ENCODE measurements at regions of chr6 and their contacts with region 1.

Region 1: DNA sequence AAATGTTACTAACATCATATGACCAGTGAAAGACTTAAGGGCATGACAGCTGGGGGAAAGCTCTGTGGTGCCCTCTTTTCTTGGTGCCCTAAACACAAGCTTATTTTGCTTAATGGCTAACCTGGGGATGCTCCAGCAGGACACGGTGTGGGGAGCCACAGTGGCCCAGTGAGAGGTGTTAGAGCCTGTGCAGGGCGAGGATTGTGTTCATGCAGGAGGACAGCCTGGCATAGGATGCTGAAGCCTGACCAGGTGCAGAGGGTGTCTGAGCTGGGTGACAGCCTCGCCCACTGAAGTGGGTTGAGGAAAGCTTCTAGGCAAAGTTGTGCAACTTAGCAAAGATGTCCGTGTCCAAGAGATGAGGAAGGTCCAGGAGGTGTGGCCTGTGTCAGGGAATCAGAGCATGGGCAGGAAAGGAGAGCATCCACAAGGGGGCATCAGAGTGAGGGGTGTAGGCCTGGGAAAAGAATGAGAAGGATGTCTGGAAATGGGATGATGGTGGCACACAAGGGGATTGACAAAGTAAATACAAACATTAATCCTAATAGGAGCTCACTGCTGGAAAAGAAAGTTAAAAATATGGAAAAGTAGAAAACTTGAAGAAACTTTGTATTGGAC is 33.9 kb downstream of the SLC17A4 start:
- DNase-seq: peak; percentile 28 to 66 (median 50)
- ATAC-seq: peak; percentile 80 to 94 (median 92)
- H3K4me3 ChIP-seq: no peak overlapping the region
- H3K27ac ChIP-seq: no peak overlapping the region
- H3K4me1 ChIP-seq: no peaks in the 10 kb centered on the region
- H3K27me3 ChIP-seq: no peaks in the 10 kb centered on the region
- CTCF ChIP-seq: peak; percentile 13 to 31 (median 24)

Region 2: GRCh38 chr6:25942561-25943147 is 154.2 kb after region 1 on chr6:
- intact Hi-C with region 1: loop called in 1 of 3 experiments (anchors 10 kb)
- DNase-seq: no peak
- ATAC-seq: peak in 3 of 4 donors; percentile 90 to 91 (median 91)
- H3K4me3 ChIP-seq: no peak overlapping the region
- H3K27ac ChIP-seq: no peak overlapping the region
- H3K4me1 ChIP-seq: no peaks in the 10 kb centered on the region
- H3K27me3 ChIP-seq: no peaks in the 10 kb centered on the region
- CTCF ChIP-seq: peak in 3 of 4 donors; percentile 16 to 36 (median 28)

Measured in pancreas (tissue), 10 donors.